ENCODE measurements at regions of chr2 and their contacts with region 1.

Region 1: GRCh38 chr2:69914170-69914960 is 544 bp upstream of the MXD1 start:
- DNase-seq: peak; percentile 95 to 100 (median 97)
- ATAC-seq: peak; percentile 89
- H3K4me3 ChIP-seq: peak overlapping the region; percentile 96
- H3K27ac ChIP-seq: peak overlapping the region; percentile 96
- H3K4me1 ChIP-seq: peaks cover 15 to 21% of the 10 kb centered on the region in 2 experiments
- H3K27me3 ChIP-seq: no peaks in the 10 kb centered on the region
- CTCF ChIP-seq: peak; percentile 61 to 65 (median 62)
- EP300 ChIP-seq: peak; percentile 23
- POLR2A ChIP-seq: peak; percentile 87
- RAD21 ChIP-seq: peak; percentile 46 to 71

Region 2: DNA sequence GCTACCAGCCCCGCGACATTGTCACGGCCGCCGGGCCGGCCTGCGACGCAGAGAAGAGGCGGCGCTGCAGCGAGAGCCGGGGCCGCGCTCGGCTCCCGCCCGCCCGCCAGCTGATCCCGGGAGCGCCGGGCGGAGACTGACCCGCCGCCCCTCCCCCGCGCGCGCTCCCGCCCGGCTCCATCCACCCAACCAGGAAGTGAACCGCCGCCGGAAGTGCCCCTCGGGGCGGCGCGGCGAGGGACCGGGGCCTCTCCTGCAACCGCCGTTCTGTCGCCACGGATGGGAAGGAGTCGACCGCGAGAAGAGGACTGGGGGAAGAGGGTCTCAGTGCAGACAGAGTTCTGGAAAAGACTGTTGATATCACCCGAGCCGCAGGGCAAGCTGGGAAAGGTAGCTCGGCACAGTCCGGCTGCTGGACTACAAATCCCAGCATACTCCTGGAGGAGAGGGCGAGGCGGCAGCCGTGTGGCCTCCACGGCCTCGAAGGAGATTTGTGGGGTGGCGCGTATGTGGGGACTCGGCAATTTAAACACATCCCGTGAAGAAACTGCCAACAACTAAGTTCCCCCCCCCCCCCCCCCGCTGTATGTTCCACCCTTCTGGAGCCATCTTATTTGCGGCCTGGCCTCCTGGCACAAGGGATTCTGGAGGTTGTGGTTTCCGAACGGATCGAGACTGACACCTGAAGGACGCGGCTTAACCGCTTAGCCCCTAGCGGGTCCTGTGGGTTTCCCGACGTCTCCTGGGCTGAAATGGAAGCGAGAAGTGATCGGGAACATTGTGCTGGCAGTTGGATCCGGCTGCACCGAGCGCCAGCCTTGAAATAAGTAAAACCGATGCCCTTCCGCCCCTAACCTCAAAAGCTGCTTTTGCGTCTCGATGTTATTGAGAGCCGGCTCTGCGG is 270.5 kb before region 1 on chr2 and contains the start of gene AAK1:
- CTCF ChIA-PET with region 1: no interaction called
- POLR2A ChIA-PET with region 1: no interaction called
- in situ Hi-C with region 1: no loop called
- intact Hi-C with region 1: loop called (anchors 10 kb)
- DNase-seq: peak; percentile 92 to 93 (median 93)
- ATAC-seq: peak; percentile 85
- H3K4me3 ChIP-seq: peak within 1 kb of the TSS; percentile 79
- H3K27ac ChIP-seq: peak within 1 kb of the TSS; percentile 99
- H3K4me1 ChIP-seq: peaks cover 15 to 32% of the 10 kb centered on the region in 2 experiments; a peak in 4 of 5 replicates
- H3K27me3 ChIP-seq: no peaks in the 10 kb centered on the region
- CTCF ChIP-seq: no peak; a peak in 1 of 6 replicates
- EP300 ChIP-seq: no peak; the same call in 1 of the 2 replicates
- POLR2A ChIP-seq: peak; percentile 88
- RAD21 ChIP-seq: no peak; a peak in 1 of 4 replicates
- polyA plus RNA-seq, gene AAK1: 0.89 to 2.4 TPM

Region 3: GRCh38 chr2:69926849-69927515 is 12.6 kb after region 1 on chr2:
- CTCF ChIA-PET with region 1: no interaction called
- POLR2A ChIA-PET with region 1: interaction called, 107 read pairs
- in situ Hi-C with region 1: no loop called
- intact Hi-C with region 1: no loop called
- DNase-seq: no peak
- ATAC-seq: 0 out of 3 replicates have a peak, but pooled peaks have one; percentile 14
- H3K4me3 ChIP-seq: no peak overlapping the region
- H3K27ac ChIP-seq: no peak overlapping the region
- H3K4me1 ChIP-seq: peaks cover under 1 to 4% of the 10 kb centered on the region in 2 experiments; a peak in 1 of 5 replicates
- H3K27me3 ChIP-seq: no peaks in the 10 kb centered on the region
- CTCF ChIP-seq: no peak
- EP300 ChIP-seq: no peak
- POLR2A ChIP-seq: no peak
- RAD21 ChIP-seq: no peak

Region 4: DNA sequence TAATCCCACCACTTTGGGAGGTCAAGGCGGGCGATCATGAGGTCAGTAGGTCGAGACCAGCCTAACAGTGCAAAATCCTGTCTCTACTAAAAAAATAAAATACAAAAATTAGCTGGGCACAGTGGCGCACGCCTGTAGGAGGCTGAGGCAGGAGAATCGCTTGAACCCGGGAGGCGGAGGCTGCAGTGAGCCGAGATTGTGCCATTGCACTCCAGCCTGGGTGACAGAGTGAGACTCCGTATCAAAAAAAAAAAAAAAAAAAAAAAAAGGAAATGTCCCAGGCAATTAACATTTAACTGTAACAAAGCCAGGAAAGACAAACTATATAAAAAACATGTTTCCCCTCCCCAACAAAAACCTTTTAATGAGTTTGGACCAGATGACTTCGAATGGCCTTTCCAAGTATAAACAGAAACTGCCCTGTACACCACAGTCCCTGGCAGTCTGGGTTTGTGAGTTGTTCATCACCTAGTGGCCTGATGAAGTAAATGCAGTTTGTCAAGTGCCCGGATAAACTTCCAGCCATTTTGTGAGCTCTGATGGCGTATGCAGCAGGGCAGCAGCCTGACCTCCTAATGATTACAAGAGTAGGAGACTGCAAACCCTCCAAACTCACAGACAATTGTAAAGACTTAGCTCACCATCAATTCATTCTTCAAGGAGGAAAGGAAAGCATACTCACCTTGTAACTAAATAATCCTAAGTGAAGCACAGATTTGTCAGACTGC is 156.3 kb after region 1 on chr2:
- CTCF ChIA-PET with region 1: interaction called, 20 read pairs
- POLR2A ChIA-PET with region 1: interaction called, 11 read pairs
- in situ Hi-C with region 1: loop called (anchors 5 kb)
- intact Hi-C with region 1: loop called (anchors 2 kb)
- DNase-seq: peak; percentile 75 to 87 (median 81)
- ATAC-seq: peak; percentile 96
- H3K4me3 ChIP-seq: no peak overlapping the region
- H3K27ac ChIP-seq: peak overlapping the region; percentile 47; the same call in 1 of the 3 replicates
- H3K4me1 ChIP-seq: peaks cover 2 to 5% of the 10 kb centered on the region in 2 experiments; a peak in 3 of 5 replicates
- H3K27me3 ChIP-seq: no peaks in the 10 kb centered on the region
- CTCF ChIP-seq: peak; percentile 88 to 95 (median 89)
- EP300 ChIP-seq: no peak
- POLR2A ChIP-seq: no peak
- RAD21 ChIP-seq: peak; percentile 91 to 94

Region 5: DNA sequence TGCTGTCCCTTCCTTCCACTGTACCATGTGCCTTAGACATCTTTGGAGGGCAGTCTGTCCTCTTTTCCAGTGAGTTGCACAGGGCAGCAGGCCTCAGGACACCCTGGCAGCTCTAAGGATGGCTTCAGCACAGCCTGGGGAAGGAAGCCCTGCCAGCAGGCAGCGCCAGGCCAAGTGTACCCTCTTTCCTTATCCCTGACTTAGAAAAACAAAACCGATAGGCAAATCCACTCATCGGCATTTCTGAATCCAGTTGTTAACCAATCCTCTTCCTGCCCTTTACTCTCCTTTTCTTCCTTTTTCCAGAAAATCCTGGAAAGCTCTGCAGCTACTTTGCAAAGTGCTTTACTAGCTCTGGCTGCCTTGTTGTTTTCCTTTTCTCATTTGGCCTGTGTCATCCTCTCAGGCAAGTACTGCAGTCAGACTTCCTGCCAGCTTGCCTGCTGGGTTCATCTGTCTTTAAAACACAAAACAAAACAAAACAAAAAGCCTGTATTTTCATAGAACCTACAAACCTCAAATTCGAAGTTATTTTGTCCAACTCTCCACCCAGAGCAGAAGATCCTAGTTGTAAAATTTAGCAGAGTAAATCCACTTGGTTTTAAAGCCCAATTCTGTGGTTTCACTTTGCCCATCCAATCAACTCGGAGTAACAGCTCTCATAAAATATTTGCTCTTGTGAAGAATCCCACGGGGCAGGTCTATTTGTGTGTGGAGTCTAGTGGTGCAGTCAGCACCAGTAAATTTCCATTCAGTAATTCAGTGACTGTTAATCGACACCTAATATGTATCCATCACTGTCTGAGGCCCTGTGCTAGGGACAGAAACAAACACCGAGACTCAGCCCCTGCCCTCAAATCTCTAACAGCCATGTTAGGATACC is 218.1 kb after region 1 on chr2:
- CTCF ChIA-PET with region 1: no interaction called
- POLR2A ChIA-PET with region 1: interaction called, 25 read pairs
- in situ Hi-C with region 1: no loop called
- intact Hi-C with region 1: no loop called
- DNase-seq: peak in 1 of 4 experiments; percentile 64
- ATAC-seq: peak; percentile 47
- H3K4me3 ChIP-seq: peak overlapping the region; percentile 2; the same call in 1 of the 2 replicates
- H3K27ac ChIP-seq: peak overlapping the region; percentile 95
- H3K4me1 ChIP-seq: peaks cover 33 to 62% of the 10 kb centered on the region in 2 experiments
- H3K27me3 ChIP-seq: no peaks in the 10 kb centered on the region
- CTCF ChIP-seq: no peak
- EP300 ChIP-seq: no peak
- POLR2A ChIP-seq: peak; percentile 62
- RAD21 ChIP-seq: no peak

Region 6: GRCh38 chr2:70190418-70191243 is 276.3 kb after region 1 on chr2 and contains the start of gene C2orf42:
- CTCF ChIA-PET with region 1: no interaction called
- POLR2A ChIA-PET with region 1: interaction called, 15 read pairs
- in situ Hi-C with region 1: no loop called
- intact Hi-C with region 1: loop called (anchors 5 kb)
- DNase-seq: peak; percentile 91 to 99 (median 96)
- ATAC-seq: peak; percentile 96
- H3K4me3 ChIP-seq: peak within 1 kb of the TSS; percentile 62
- H3K27ac ChIP-seq: peak within 1 kb of the TSS; percentile 85
- H3K4me1 ChIP-seq: peaks cover 3 to 4% of the 10 kb centered on the region in 2 experiments; a peak in 2 of 5 replicates
- H3K27me3 ChIP-seq: no peaks in the 10 kb centered on the region
- CTCF ChIP-seq: peak; percentile 19 to 44 (median 35); a peak in 5 of 6 replicates
- EP300 ChIP-seq: 0 out of 2 replicates have a peak, but pooled peaks have one; percentile 3
- POLR2A ChIP-seq: peak; percentile 96
- RAD21 ChIP-seq: peak; percentile 7 to 26; a peak in 3 of 4 replicates
- polyA plus RNA-seq, gene C2orf42: 4.6 to 4.9 TPM

Region 7: DNA sequence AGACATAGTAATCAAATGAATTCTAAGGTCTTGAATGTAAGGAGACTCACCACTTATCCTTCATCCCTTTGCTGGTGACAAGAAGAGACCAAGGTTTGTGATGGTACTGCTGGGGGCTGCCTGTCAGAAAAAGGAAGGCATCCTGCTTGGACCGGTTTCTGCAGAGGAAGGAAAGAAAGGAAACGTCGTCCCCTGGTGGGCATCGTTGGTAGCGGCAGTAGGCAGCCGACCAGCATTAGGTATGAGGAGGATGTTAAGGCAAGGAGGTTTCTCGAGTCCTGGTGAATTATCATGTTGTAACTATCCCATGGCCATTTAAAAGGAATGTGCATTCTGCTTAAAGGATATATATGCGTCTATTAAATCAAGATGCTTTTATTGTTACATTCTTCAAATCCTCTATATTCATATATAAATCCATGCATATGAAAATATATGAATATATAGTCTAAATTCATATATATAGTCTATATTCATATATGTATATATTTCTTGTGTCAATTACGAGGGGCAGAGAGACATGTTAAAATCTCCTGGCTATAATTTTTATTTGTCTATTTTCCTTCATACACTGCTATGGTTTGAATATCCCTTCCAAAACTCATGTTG is 733.6 kb after region 1 on chr2:
- CTCF ChIA-PET with region 1: no interaction called
- POLR2A ChIA-PET with region 1: no interaction called
- in situ Hi-C with region 1: loop called (anchors 25 kb)
- intact Hi-C with region 1: no loop called
- DNase-seq: peak; percentile 61 to 77 (median 70)
- ATAC-seq: peak; percentile 91
- H3K4me3 ChIP-seq: no peak overlapping the region
- H3K27ac ChIP-seq: no peak overlapping the region
- H3K4me1 ChIP-seq: no peaks in the 10 kb centered on the region
- H3K27me3 ChIP-seq: no peaks in the 10 kb centered on the region; a peak in 1 of 5 replicates
- CTCF ChIP-seq: peak; percentile 91 to 97 (median 94)
- EP300 ChIP-seq: no peak
- POLR2A ChIP-seq: no peak
- RAD21 ChIP-seq: peak; percentile 82 to 92

Measured in K562 (cell line).